ENCODE measurements at regions of chr1 and their contacts with region 1.

Region 1: DNA sequence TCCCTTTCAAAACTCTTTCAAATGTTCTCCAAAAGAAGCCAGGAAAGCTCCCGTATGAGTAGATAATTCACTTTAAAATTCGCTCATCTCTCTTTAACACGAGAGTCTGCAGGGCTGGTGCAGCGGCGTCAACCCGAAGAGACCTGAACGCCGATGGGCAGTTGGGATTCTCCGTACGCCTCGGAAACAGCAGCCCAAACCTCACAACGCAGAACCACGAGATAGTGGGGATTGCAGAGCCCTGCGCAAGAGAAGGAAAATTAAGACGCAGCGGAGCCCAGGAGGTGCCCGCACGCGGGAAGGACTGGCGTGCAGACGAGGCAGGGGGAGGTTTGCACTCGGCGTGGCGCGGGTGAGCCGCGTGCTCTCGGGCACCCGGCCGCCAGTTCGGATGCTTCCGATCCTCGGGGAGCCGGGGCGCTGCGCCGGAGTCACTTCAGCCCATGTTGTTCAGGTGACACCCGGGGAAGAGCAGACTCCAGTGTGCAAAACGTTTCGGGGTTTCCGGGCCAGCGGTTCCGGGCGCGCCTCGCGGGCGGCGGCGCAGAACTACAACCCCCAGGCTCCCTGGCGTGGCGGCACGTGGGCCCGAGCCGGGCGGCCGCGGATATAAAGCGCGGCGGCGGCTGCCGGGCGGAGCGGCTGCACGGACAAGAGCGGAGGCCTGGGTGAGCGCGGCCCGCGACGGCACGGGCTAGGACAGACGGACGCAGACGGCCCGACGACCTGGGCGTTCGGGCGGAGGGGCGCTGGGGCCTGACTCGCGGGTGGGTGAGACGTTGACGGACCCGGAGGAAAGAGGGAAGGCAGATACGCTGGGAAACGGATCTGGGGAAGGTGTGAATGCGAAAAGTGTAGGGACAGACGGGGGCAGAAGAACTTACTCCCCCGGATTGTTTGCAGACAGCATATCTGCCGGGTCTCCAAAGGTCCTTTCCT is at the start of gene NPL:
- ATAC-seq: peak; percentile 93 to 98 (median 98)
- H3K4me3 ChIP-seq: peak within 1 kb of the TSS; percentile 49 to 68 (median 60)
- H3K27ac ChIP-seq: no peak within 1 kb of the TSS
- H3K4me1 ChIP-seq: peaks cover 3 to 8% of the 10 kb centered on the region in 2 donors
- total RNA-seq, gene NPL: 2.3 to 10.1 (median 4.0) TPM

Region 2: GRCh38 chr1:182446033-182446669 is 343.3 kb before region 1 on chr1:
- in situ Hi-C with region 1: loop called in 2 of 9 experiments (anchors 10 kb)
- ATAC-seq: peak in 3 of 8 experiments; percentile 63 to 68 (median 67)
- H3K4me3 ChIP-seq: no peak overlapping the region
- H3K27ac ChIP-seq: no peak overlapping the region
- H3K4me1 ChIP-seq: no peaks in the 10 kb centered on the region

Region 3: GRCh38 chr1:182595641-182596240 is 193.7 kb before region 1 on chr1:
- in situ Hi-C with region 1: loop called (anchors 5 to 10 kb)
- ATAC-seq: peak; percentile 10 to 73 (median 58)
- H3K4me3 ChIP-seq: no peak overlapping the region
- H3K27ac ChIP-seq: no peak overlapping the region
- H3K4me1 ChIP-seq: peaks cover under 1% of the 10 kb centered on the region in 2 donors

Region 4: DNA sequence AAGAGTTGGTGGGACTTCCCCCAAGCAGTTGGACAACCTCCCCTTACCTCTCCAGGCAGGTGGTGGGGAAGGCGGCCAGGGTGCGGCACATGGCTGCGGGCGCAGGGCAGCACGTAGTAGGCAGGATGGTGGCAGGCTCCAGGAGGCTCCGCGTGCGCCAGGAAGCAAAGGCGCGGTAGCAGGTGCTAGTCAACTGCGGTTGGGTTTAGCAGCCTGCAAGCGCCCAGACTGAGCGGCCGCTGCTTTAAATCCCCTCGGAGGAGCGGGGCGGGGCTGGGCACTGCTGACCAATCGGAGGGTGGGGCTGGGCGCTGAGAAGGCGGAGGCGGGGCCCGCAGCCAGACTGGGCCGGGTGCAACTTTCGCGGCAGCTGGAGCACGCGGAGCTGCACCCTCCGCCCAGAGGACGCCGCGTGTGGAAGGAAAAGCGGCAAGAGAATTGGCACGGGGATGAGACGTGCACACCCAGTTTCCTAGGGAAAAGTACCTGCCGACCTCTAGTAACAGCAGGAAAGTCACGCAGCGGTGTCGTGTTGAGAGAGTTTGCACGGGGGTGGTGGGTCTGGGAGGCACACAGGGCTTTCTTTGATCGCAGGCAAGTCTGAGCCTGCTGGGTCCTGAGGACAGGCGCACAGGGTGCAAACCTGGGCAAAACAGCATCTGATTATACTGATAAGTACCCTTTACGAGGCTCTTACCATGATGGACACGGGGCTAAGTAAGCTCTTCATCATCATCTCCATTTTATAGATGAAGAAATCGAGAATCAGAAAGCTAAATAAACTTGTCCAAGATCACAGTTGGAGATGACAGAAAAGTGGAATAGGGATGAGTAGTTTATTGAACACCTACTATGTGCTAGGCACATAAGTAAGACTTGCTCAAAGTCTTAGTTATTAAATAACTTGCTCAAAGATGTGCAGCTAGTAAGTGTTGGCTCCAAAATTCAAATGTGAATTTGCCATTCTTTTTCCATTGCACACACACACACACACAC is 184.9 kb before region 1 on chr1 and contains the start of gene RGS16:
- in situ Hi-C with region 1: loop called (anchors 5 to 10 kb)
- ATAC-seq: peak; percentile 77 to 95 (median 95)
- H3K4me3 ChIP-seq: peak within 1 kb of the TSS; percentile 34 to 61 (median 46)
- H3K27ac ChIP-seq: no peak within 1 kb of the TSS
- H3K4me1 ChIP-seq: peaks cover 40 to 41% of the 10 kb centered on the region in 2 donors
- total RNA-seq, gene RGS16: 2.1 to 48.1 (median 24.5) TPM